ENCODE measurements at regions of chr13 and their contacts with region 1.

Region 1: GRCh38 chr13:77565635-77566034 is 30.1 kb downstream of the SCEL start:
- H3K4me3 Mint-ChIP-seq: no peak overlapping the region
- H3K27ac Mint-ChIP-seq: no peak overlapping the region
- H3K4me1 Mint-ChIP-seq: peaks cover 5% of the 10 kb centered on the region
- H3K27me3 Mint-ChIP-seq: no peaks in the 10 kb centered on the region

Region 2: DNA sequence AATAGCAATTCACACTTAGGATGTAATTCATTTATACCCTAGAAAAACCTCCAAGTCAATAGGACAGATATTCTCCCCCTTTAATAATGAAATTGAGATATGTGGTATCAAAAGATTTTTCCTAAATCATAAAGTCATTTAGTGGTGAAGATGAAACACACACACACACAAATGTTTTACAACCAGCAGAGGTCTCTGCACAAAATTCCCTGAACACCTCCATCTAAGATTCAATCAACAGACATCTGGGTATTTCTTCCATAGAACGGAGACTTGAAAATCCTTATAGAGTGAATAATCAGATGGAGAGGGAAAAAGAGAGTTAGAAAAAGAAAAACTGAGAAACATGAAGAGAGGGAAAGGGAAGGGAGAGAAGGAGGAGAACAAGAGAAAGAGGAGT is 291.5 kb before region 1 on chr13:
- intact Hi-C with region 1: loop called (anchors 10 kb)
- H3K4me3 Mint-ChIP-seq: no peak overlapping the region
- H3K27ac Mint-ChIP-seq: no peak overlapping the region
- H3K4me1 Mint-ChIP-seq: no peaks in the 10 kb centered on the region
- H3K27me3 Mint-ChIP-seq: no peaks in the 10 kb centered on the region

Region 3: GRCh38 chr13:77492982-77493381 is 72.7 kb before region 1 on chr13:
- intact Hi-C with region 1: loop called (anchors 1 kb)
- H3K4me3 Mint-ChIP-seq: no peak overlapping the region
- H3K27ac Mint-ChIP-seq: no peak overlapping the region
- H3K4me1 Mint-ChIP-seq: no peaks in the 10 kb centered on the region
- H3K27me3 Mint-ChIP-seq: no peaks in the 10 kb centered on the region